Dendritic cell treated with granulocyte-macrophage colony-stimulating factor and Interleukin-4, amounts not matched to agents 40 ng/mL and 50 ng/mL, for 4 days (primary cell): ENCODE measurements at regions of chr11 and their contacts with region 1.

Region 1: DNA sequence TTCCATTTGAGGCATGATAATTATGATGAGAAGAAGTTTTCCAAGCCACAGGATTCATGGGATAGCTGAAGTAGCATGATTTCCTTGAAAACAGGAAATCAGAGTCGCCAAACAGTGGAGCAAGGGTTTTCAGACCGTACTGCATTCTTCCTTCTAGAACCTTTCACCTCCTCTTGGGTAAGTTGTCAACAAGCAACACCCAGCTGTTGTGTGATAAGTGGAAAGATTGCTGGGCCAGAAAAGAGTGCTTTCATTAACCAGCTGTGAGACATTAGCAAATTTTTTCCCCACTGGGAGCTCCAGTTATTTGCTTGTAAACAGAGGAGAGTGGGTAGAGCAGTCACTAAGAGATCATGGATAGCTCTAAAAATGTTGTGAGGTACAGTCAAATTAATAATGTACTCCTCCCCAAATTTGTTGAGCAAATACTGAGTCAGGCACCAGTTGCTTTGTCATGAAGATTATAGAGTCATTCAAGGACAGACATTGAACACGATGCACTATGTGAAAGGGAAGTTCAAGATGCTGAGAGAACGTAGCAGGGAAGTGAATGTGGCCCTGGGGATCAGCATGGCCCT is 11.7 kb upstream of the MPEG1 start:
- H3K4me3 Mint-ChIP-seq: peak overlapping the region; percentile 27
- H3K27ac Mint-ChIP-seq: peak overlapping the region; percentile 89
- H3K4me1 Mint-ChIP-seq: peaks cover 69% of the 10 kb centered on the region
- H3K27me3 Mint-ChIP-seq: no peaks in the 10 kb centered on the region

Region 2: DNA sequence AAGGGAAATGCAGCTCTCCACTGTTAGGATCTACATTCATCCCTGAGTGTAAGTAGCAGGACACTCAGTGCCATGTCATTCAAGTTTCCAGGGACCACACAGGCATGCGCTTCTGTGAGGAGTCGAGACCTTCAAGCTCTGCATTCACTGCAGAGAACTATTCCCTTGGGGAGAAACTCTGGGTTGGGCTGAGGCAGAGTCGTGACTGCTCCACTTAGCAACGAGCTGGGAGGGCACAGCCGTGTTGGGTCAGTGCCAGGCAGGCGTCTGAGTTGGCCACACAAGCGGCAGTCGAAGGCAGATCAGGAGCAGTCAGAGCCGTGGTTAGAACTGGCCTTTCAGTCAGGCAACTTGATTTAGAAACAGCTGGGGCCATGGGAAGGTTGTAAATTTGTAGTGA is 26.4 kb before region 1 on chr11:
- intact Hi-C with region 1: no loop called
- H3K4me3 Mint-ChIP-seq: no peak overlapping the region
- H3K27ac Mint-ChIP-seq: no peak overlapping the region
- H3K4me1 Mint-ChIP-seq: peaks cover 41% of the 10 kb centered on the region
- H3K27me3 Mint-ChIP-seq: peaks cover 20% of the 10 kb centered on the region

Region 3: DNA sequence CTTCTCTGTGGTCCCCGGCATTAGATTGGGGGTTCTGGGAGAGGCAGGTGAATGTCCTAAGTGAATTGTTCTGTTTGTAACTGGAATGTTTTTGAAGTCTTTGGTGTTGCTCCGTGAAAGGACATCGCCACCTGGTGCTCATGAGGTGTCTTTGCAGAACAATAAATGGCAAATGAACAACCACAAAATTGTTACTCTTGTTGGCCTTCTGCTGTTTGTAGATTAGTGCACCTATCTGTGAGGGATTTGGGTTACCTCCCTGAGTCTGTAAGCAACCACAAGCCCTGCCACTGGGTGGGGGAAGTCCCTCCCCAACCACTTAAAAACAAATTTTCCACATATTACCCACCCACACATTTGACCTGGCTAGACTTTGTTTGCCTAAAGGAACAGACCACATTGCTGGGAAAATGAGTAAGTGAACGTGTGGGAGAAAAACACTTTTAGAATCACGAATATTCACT is 16.4 kb before region 1 on chr11:
- intact Hi-C with region 1: loop called (anchors 2 kb)
- H3K4me3 Mint-ChIP-seq: peak overlapping the region; percentile 97
- H3K27ac Mint-ChIP-seq: peak overlapping the region; percentile 95
- H3K4me1 Mint-ChIP-seq: peaks cover 76% of the 10 kb centered on the region
- H3K27me3 Mint-ChIP-seq: no peaks in the 10 kb centered on the region

Region 4: DNA sequence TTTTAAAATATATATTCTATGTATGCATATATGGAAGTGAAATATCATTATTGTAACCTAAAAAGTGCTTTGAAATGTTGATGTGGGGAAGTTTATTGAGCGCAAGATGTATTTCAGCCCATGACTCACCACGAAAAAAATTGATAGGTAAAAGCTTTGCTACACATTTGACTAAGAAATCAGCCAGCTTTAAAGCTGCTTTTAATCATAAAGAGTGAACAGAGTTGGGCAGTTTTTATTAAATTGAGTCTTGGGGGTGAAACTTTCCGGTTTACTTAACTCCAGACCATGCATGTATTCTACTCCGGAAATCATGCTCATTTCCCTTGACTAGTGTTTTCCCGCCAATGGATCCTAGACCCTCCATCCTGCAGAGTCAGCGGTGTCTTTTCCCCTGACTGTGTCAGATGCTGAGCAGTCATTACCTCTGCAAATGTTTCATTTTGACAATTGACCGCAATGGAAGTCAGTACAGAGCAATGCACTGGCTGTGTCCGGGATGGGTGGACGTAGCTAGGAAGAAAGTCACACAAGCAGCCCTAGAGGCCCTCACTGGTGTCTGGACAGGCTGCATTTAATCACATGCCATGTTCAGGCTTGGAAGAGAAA is 35.5 kb after region 1 on chr11:
- intact Hi-C with region 1: loop called (anchors 5 kb)
- H3K4me3 Mint-ChIP-seq: no peak overlapping the region
- H3K27ac Mint-ChIP-seq: no peak overlapping the region
- H3K4me1 Mint-ChIP-seq: peaks cover 57% of the 10 kb centered on the region
- H3K27me3 Mint-ChIP-seq: peaks cover 2% of the 10 kb centered on the region